ENCODE measurements at regions of chr6 and their contacts with region 1.

Region 1: DNA sequence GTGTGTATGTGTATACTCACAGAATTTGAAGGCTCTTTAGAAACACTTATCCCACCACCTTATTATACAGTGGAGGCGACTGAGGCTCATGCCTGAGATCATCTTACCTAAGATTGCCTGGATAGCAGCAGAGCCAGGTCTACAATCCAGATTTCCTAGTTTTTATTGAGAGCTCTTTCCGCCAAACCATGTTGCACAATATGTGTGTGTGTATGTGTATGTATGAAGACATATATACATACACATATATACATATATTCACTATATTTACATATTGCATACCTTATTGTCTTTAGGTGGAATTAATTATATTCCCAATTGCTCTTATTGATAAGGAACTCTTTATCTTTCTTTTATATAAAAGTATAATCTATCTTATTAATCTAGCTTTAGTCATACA is 130.6 kb downstream of the AFG1L start:
- DNase-seq: no peak
- ATAC-seq: no peak
- H3K4me3 ChIP-seq: no peak overlapping the region
- H3K4me3 Mint-ChIP-seq: no peak overlapping the region
- H3K27ac ChIP-seq: no peak overlapping the region
- H3K27ac Mint-ChIP-seq: no peak overlapping the region
- H3K4me1 ChIP-seq: no peaks in the 10 kb centered on the region
- H3K4me1 Mint-ChIP-seq: no peaks in the 10 kb centered on the region
- H3K27me3 ChIP-seq: no peaks in the 10 kb centered on the region
- H3K27me3 Mint-ChIP-seq: no peaks in the 10 kb centered on the region
- CTCF ChIP-seq: no peak

Region 2: GRCh38 chr6:108438918-108439317 is 13.5 kb after region 1 on chr6:
- CTCF ChIA-PET with region 1: no interaction called
- POLR2A ChIA-PET with region 1: no interaction called
- intact Hi-C with region 1: no loop called
- DNase-seq: no peak
- ATAC-seq: no peak
- H3K4me3 ChIP-seq: no peak overlapping the region
- H3K4me3 Mint-ChIP-seq: no peak overlapping the region
- H3K27ac ChIP-seq: no peak overlapping the region
- H3K27ac Mint-ChIP-seq: no peak overlapping the region
- H3K4me1 ChIP-seq: no peaks in the 10 kb centered on the region
- H3K4me1 Mint-ChIP-seq: no peaks in the 10 kb centered on the region
- H3K27me3 ChIP-seq: no peaks in the 10 kb centered on the region
- H3K27me3 Mint-ChIP-seq: no peaks in the 10 kb centered on the region
- CTCF ChIP-seq: no peak

Region 3: GRCh38 chr6:109373762-109374161 is 948.3 kb after region 1 on chr6:
- CTCF ChIA-PET with region 1: no interaction called
- POLR2A ChIA-PET with region 1: no interaction called
- intact Hi-C with region 1: loop called in 1 of 2 experiments (anchors 5 kb)
- DNase-seq: peak in 1 of 9 experiments; percentile 43
- ATAC-seq: peak; percentile 43
- H3K4me3 ChIP-seq: no peak overlapping the region
- H3K4me3 Mint-ChIP-seq: peak overlapping the region; percentile 35
- H3K27ac ChIP-seq: no peak overlapping the region
- H3K27ac Mint-ChIP-seq: no peak overlapping the region
- H3K4me1 ChIP-seq: peaks cover 42% of the 10 kb centered on the region
- H3K4me1 Mint-ChIP-seq: peaks cover 67% of the 10 kb centered on the region
- H3K27me3 ChIP-seq: no peaks in the 10 kb centered on the region
- H3K27me3 Mint-ChIP-seq: no peaks in the 10 kb centered on the region
- CTCF ChIP-seq: no peak

Region 4: GRCh38 chr6:110389689-110390382 is 1964.4 kb after region 1 on chr6:
- CTCF ChIA-PET with region 1: no interaction called
- POLR2A ChIA-PET with region 1: no interaction called
- intact Hi-C with region 1: no loop called
- DNase-seq: peak in 3 of 9 experiments; percentile 14 to 53 (median 36)
- ATAC-seq: peak; percentile 45
- H3K4me3 ChIP-seq: no peak overlapping the region
- H3K4me3 Mint-ChIP-seq: peak overlapping the region; percentile 35
- H3K27ac ChIP-seq: peak overlapping the region in 1 of 2 experiments; percentile 26
- H3K27ac Mint-ChIP-seq: peak overlapping the region; percentile 93
- H3K4me1 ChIP-seq: peaks cover 33% of the 10 kb centered on the region
- H3K4me1 Mint-ChIP-seq: peaks cover 39% of the 10 kb centered on the region
- H3K27me3 ChIP-seq: no peaks in the 10 kb centered on the region
- H3K27me3 Mint-ChIP-seq: no peaks in the 10 kb centered on the region
- CTCF ChIP-seq: no peak